GM12878 (cell line): ENCODE measurements at regions of chr17 and their contacts with region 1.

Region 1: DNA sequence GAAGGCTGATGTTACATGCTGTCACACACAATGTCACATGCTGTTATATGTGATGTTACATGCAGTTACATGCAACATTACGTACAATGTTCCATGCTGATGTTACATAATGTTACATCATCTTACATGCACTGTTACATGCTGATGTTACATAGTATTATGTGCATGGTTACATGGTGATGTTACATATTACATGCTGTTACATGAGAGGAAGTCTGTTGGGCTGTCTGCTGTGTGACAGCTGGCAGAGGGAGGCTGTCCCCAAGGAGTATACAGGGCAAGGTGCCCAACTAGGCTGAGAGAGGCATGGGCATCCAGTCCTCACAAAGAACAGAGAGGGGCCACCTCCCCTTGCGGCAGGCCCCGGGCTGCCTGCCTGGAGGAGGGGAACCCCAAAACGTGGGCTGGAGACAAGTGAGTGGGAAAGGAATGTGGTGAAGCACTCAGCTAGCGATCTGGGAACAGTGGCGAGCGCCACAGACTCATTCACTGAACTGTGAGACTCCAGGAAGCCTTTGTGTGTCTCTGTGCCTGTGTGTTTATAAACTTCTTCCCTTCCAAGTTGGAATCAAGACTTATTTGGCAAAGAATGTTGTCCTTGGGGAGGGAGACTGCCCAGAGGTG is 30.6 kb downstream of the TMEM92 start:
- DNase-seq: no peak
- ATAC-seq: peak; percentile 47
- H3K4me3 ChIP-seq: no peak overlapping the region
- H3K27ac ChIP-seq: no peak overlapping the region
- H3K4me1 ChIP-seq: peaks cover 3% of the 10 kb centered on the region
- H3K27me3 ChIP-seq: no peaks in the 10 kb centered on the region
- CTCF ChIP-seq: no peak
- EP300 ChIP-seq: no peak
- POLR2A ChIP-seq: no peak
- RAD21 ChIP-seq: no peak

Region 2: DNA sequence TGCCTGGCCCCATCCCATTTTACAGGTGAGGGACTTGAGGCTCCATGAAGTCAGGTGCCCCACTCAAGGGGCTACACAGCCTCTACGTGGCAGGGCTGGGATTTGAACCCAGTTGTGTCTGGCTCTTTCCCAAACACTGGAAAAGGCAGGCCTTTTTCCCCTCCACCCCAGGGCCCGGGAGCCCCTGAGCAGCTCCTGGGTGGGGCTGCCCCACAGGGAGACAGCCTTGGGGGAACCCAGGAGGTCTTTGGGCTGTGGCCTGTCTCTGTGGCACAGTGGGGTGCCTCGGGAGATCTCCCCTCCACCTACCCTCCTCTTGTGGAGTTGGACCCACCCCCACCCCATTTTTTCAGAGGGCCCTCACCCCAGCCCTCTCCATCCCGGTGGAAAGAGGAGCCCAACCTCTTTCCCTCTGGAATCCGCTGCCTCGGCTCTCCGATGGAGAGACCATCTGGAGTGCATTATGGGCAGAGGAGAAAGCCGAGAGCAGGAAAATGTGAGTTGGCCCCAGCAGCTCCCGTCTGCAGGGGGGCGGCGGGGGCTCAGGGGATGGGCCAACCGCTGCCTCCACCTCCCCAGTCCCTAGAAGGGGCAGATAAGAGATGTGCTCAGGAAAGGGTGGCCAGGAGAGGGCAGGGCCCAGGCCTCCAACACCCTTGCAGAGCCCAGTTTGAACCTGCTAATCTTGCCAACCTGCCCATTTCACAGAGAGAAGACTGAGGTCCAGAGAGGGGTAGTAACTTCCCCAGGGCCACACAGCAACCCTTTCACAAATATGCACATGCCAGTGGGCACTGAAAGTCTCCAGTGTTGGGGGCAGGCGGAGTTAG is 46.0 kb before region 1 on chr17:
- CTCF ChIA-PET with region 1: no interaction called
- POLR2A ChIA-PET with region 1: no interaction called
- RAD21 ChIA-PET with region 1: no interaction called
- SMC1A ChIA-PET with region 1: no interaction called
- in situ Hi-C with region 1: no loop called
- intact Hi-C with region 1: no loop called
- DNase-seq: no peak
- ATAC-seq: no peak
- H3K4me3 ChIP-seq: no peak overlapping the region
- H3K27ac ChIP-seq: no peak overlapping the region
- H3K4me1 ChIP-seq: no peaks in the 10 kb centered on the region
- H3K27me3 ChIP-seq: no peaks in the 10 kb centered on the region; a peak in 1 of 4 replicates
- CTCF ChIP-seq: no peak
- EP300 ChIP-seq: no peak
- POLR2A ChIP-seq: no peak
- RAD21 ChIP-seq: no peak

Region 3: GRCh38 chr17:50345432-50346312 is 40.8 kb after region 1 on chr17 and contains the start of gene XYLT2:
- CTCF ChIA-PET with region 1: interaction called, 3 read pairs
- POLR2A ChIA-PET with region 1: interaction called, 4 read pairs
- RAD21 ChIA-PET with region 1: interaction called, 6 read pairs
- SMC1A ChIA-PET with region 1: interaction called, 3 read pairs
- in situ Hi-C with region 1: no loop called
- intact Hi-C with region 1: loop called (anchors 5 kb)
- DNase-seq: no peak
- ATAC-seq: peak; percentile 90
- H3K4me3 ChIP-seq: peak within 1 kb of the TSS; percentile 85
- H3K27ac ChIP-seq: peak within 1 kb of the TSS; percentile 59
- H3K4me1 ChIP-seq: peaks cover 3% of the 10 kb centered on the region
- H3K27me3 ChIP-seq: no peaks in the 10 kb centered on the region
- CTCF ChIP-seq: no peak
- EP300 ChIP-seq: no peak
- POLR2A ChIP-seq: peak; percentile 99
- RAD21 ChIP-seq: no peak
- polyA plus RNA-seq, gene XYLT2: 0.82 to 1.5 TPM

Region 4: DNA sequence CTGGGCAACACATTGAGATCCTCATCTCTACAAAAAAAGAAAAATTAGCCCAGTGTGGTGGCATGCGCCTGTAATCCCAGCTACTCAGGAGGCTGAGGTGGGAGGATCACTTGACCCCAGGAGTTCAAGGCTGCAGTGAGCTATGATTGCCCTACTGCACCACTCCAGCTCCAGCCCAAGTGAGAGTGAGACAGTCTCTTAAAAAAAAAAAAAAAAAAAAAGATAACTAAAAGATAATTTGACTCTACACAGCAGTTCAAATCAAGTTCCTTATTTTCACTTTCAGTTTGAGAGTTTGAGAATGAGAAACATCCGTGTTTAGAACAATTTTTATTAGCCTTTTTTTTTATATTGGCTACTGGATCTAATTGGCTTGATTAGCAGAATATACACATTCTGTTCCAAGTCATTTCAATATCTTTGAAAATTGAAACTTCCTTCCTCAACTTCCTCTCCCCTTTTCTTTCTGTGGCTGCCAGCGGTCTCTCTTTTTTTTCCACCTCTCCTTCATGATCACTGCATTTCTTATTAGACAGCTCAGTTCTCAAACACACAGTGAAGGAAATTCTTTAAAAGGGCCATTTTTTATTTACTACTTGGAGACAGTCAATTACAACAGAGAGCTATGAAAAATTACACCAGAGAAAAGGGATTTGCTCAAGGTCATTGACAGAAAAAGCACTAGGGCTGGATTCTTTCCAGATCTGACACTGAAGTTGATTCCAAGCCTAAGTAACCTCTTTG is 116.6 kb after region 1 on chr17:
- CTCF ChIA-PET with region 1: no interaction called
- POLR2A ChIA-PET with region 1: no interaction called
- RAD21 ChIA-PET with region 1: no interaction called
- SMC1A ChIA-PET with region 1: no interaction called
- in situ Hi-C with region 1: no loop called
- intact Hi-C with region 1: no loop called
- DNase-seq: no peak
- ATAC-seq: peak; percentile 50
- H3K4me3 ChIP-seq: peak overlapping the region; percentile 39; the same call in 1 of the 2 replicates
- H3K27ac ChIP-seq: peak overlapping the region; percentile 80
- H3K4me1 ChIP-seq: peaks cover 22% of the 10 kb centered on the region
- H3K27me3 ChIP-seq: no peaks in the 10 kb centered on the region
- CTCF ChIP-seq: no peak
- EP300 ChIP-seq: no peak
- POLR2A ChIP-seq: no peak
- RAD21 ChIP-seq: no peak